ENCODE measurements at regions of chr2 and their contacts with region 1.

Region 1: GRCh38 chr2:166127217-166128155 is at the start of gene SCN1A:
- DNase-seq: no peak
- ATAC-seq: no peak
- H3K4me3 Mint-ChIP-seq: no peak within 1 kb of the TSS
- H3K27ac Mint-ChIP-seq: no peak within 1 kb of the TSS
- H3K4me1 Mint-ChIP-seq: no peaks in the 10 kb centered on the region
- H3K27me3 Mint-ChIP-seq: peaks cover 19% of the 10 kb centered on the region
- total RNA-seq, gene SCN1A: not detected

Region 2: DNA sequence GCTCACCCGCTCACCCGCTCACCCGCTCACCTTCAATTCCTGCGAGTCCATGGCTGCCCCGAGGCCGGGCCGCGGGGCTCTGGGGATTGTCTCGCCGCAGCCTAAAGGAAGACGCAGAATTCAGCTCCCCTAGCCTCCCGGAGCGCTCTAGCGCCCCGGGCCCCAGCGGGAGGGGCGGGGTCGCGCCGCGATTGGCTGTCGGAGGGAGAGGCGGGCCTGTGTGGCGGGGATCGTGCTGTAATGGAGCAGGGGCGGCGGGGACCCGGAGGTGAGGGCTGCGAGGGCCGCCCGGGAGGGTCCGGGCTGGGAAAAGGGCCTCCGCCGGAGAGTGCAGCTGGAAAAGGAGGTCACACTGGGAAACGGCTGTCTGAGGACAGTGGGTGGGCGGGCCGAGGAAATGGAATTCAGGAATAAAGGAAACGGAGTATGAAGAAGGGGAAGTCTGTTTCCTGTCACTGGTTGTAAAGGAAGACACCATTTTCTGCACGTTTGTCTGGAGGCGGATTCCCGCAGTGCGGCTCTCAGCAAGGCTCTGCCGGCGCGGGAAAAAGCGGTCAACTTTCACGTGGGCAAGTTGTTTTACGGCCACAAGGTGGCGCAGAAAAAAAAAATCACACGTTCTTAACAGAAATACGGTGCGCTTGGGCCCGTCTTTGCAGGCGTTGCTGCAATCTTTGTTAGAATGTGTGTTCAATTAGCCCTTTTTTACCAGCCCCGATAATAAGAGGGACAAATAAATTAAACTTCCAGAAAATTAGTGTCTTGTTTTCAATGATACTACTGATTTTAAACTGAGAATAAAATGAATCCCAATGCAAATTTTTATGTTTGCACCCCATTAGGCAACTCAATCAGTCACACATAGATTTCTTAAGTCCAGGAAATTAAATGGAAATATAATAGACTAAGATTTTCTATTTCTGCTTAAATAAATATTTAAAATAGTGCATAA is 173.6 kb before region 1 on chr2 and contains the start of gene TTC21B:
- CTCF ChIA-PET with region 1: interaction called, 12 read pairs
- POLR2A ChIA-PET with region 1: interaction called, 3 read pairs
- DNase-seq: peak; percentile 92
- ATAC-seq: peak; percentile 98
- H3K4me3 Mint-ChIP-seq: peak within 1 kb of the TSS; percentile 59
- H3K27ac Mint-ChIP-seq: no peak within 1 kb of the TSS
- H3K4me1 Mint-ChIP-seq: peaks cover 15% of the 10 kb centered on the region
- H3K27me3 Mint-ChIP-seq: no peaks in the 10 kb centered on the region
- total RNA-seq, gene TTC21B: 15.8 to 16.4 TPM

Region 3: DNA sequence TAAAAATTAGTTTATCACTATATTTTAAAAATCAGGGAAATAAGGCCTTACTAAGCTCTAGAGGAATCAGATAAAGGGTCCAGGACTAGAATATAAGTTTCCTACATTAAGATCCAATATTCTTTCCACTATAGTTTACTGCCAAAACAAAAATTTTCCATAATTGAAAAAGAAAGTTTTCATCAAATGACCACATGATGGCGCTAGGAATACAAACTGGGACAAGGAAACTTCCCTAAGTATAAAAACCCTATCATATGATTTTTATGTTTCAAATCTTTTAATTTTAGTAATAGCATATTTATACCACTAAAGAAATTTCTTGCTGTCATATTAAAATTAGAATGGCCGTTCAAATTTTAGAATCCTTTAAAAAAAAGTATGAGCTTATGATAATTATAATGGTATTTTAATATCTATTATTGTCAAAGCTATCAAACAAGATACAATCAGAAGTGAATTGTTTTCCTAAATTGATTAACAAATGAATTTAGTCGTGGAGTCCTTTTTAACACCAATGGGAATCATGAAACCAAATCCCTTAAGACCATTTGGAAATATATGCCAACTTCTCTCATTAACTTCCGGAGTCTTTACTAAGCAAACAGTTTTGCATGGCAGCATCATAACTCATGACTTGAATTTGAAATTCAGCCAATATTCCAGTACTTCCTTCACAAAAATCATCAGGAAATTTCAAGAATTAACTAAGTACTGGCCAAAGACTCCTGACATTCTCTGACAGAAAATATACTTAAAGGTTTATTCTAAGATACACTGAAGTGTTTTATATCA is 69.9 kb before region 1 on chr2:
- CTCF ChIA-PET with region 1: interaction called, 10 read pairs
- POLR2A ChIA-PET with region 1: no interaction called
- DNase-seq: no peak
- ATAC-seq: no peak
- H3K4me3 Mint-ChIP-seq: no peak overlapping the region
- H3K27ac Mint-ChIP-seq: no peak overlapping the region
- H3K4me1 Mint-ChIP-seq: no peaks in the 10 kb centered on the region
- H3K27me3 Mint-ChIP-seq: no peaks in the 10 kb centered on the region

Region 4: DNA sequence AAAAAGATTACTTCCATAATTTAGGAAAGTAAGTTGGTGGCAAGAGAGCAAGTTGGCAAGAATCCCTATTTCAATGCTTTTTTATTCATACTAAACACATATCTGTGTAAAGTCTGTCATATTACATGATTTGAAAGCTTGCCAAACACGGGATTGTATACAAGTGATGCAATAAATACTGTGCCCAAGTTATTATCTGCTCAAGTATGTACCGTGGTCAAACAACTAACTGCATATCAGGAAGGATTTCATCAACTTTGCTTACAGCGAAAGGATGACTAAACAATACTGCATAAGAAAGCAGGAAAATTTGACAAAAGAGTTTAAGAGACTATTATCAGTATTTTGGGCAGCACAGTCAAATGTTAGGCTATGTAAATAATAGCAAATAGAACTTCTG is 70.0 kb after region 1 on chr2:
- CTCF ChIA-PET with region 1: no interaction called
- POLR2A ChIA-PET with region 1: no interaction called
- DNase-seq: no peak
- ATAC-seq: no peak
- H3K4me3 Mint-ChIP-seq: no peak overlapping the region
- H3K27ac Mint-ChIP-seq: no peak overlapping the region
- H3K4me1 Mint-ChIP-seq: no peaks in the 10 kb centered on the region
- H3K27me3 Mint-ChIP-seq: no peaks in the 10 kb centered on the region

Measured in activated CD8-positive, alpha-beta T cell treated with anti-CD3 and anti-CD28 coated beads, Interleukin-2, amount 10 ng/mL, durations not matched to agents 7 days and 5 days (primary cell).